Right ventricle myocardium inferior (tissue), 1 donor: ENCODE measurements at regions of chr17 and their contacts with region 1.

Region 1: GRCh38 chr17:45834471-45835396 is 9.9 kb upstream of the SPPL2C start:
- DNase-seq: peak; percentile 45
- ATAC-seq: no peak

Region 2: DNA sequence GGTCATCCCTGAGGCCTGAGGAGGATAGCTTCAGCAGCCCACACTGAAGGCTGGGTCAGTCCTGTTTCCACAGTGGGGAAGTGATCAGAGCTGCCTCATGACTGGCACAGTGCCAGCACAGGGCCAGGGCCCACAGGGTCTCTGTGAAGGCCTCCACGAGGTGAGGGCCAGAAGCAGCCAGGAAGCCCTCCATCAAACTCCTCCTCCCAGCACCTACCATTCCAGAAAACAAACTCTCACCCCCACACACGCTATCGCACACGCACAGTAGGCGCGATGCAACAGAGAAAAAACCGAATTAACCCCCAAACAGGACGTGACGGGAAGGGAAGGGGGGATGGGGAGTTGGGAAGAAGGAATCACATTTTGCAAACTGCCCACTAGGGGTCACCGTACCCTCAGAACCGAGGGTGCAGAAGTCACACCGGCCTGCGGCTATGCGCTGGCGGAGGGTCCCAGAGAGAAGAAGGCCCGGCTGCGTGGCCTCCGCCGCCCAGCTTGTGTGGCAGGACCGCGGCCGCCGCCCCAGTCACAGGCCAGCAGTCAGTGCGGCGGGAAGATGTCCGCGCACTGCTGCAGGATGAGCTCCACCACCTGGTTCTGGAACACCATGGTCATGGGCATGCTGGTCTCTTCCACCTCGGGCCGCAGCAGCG is 439.7 kb before region 1 on chr17:
- intact Hi-C with region 1: loop called (anchors 10 kb)
- DNase-seq: peak; percentile 82
- ATAC-seq: peak; percentile 63

Region 3: DNA sequence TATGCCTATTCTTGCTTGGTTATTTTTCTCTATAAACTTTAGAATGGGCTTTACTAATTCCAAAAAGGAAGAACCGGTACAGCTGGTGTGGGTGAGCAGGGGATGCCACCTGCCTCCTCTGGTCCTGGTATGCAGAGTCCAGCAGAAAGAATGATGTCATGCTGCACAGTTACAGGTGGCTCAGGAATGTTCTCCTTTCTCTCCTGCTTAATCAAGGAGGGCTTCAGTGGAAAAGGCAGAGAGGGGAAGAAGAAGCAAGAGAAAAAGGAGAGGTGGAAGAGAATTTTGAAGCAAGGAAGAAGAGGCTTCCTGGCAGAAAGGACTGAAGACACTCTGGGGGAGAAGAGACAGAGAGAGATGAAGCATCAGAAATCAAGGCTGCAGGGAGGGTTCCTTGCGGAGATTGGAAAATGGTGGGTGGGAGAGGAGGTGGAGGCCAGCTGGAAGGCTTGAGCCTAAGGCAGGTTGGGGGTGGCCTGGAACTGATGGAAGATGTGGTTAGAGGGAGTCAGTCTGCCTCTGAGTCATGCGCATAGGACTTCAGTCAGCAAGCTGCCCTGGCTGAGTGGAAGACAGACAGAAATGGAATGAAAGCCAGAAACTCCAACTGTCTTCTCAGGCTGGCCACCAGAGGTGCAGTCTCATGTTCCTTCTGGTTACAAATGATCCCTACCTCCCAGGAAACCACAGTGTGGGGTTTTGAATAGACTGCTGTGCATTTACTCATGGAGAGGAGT is 115.2 kb before region 1 on chr17:
- intact Hi-C with region 1: loop called (anchors 5 kb)
- DNase-seq: no peak
- ATAC-seq: peak; percentile 39